Sigmoid colon (tissue), 7 donors: ENCODE measurements at regions of chr1 and their contacts with region 1.

Region 1: DNA sequence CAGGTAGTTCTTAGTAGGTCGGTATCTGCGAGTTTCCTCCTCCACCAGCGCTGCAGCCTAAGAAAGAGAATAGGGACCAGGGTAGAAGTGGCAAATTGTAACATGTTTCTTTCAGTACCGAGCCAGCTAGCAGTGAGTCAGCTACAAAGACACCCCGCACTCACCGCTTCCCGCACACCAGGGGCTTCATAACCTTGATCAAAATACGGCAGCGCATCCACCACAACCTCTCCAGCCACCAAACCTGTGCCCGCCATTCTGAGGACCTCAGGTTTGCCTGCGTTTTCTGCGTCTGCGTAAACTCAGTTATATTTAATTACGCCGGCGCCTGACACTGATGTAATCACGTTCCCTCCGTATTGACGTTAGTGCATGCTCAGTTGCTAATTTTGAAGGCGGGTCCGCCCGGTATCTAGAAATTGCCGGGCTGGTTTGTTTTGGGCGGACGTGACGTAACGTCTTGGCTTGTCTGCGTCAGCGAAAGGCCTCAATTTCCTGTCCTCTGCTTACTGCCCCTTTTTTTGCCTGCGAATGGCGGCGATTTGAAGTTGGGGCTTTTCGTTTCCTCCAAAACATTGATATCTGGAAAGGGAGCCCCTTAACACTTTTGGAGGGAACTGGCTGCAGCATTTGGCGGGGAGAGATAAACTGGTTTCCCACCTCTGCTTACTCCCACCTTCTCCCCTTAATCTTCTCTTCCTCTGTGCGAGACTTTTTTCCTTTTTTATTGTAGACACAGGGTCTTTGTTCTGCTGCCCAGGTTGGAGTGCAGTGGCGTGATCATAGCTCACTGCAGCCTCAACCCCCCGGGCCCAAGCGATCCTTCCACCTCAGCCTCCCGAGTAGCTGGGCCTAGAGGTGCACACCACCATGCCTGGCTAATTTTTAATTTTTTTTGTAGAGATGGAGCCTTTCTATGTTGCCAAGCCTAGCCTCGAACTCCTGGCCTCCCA is at the start of gene BCAS2:
- DNase-seq: peak; percentile 99
- H3K4me3 ChIP-seq: peak within 1 kb of the TSS; percentile 61 to 71 (median 63)
- H3K27ac ChIP-seq: peak within 1 kb of the TSS; percentile 86 to 91 (median 89)
- H3K4me1 ChIP-seq: peaks cover 0 to 33% (median 26%) of the 10 kb centered on the region in 4 donors
- H3K27me3 ChIP-seq: no peaks in the 10 kb centered on the region
- CTCF ChIP-seq: no peak
- EP300 ChIP-seq: peak; percentile 79 to 93 (median 87)
- POLR2A ChIP-seq: peak; percentile 82 to 85
- total RNA-seq, gene BCAS2: 29.1 to 47.6 (median 35.9) TPM

Region 2: GRCh38 chr1:113389953-113390834 is 1191.4 kb before region 1 on chr1 and contains the start of gene MAGI3:
- intact Hi-C with region 1: loop called (anchors 10 kb)
- DNase-seq: peak; percentile 99
- H3K4me3 ChIP-seq: peak within 1 kb of the TSS; percentile 87 to 98 (median 97)
- H3K27ac ChIP-seq: peak within 1 kb of the TSS; percentile 87 to 94 (median 92)
- H3K4me1 ChIP-seq: peaks cover 0 to 42% (median 25%) of the 10 kb centered on the region in 4 donors
- H3K27me3 ChIP-seq: no peaks in the 10 kb centered on the region
- CTCF ChIP-seq: no peak
- EP300 ChIP-seq: no peak
- POLR2A ChIP-seq: peak; percentile 60 to 77
- total RNA-seq, gene MAGI3: 18.9 to 22.5 (median 21.8) TPM

Region 3: GRCh38 chr1:114152508-114153260 is 428.9 kb before region 1 on chr1:
- intact Hi-C with region 1: no loop called
- DNase-seq: peak; percentile 75
- H3K4me3 ChIP-seq: peak overlapping the region; percentile 24 to 53 (median 42)
- H3K27ac ChIP-seq: no peak overlapping the region
- H3K4me1 ChIP-seq: peaks cover 0 to 35% (median 30%) of the 10 kb centered on the region in 4 donors
- H3K27me3 ChIP-seq: peaks cover 39 to 88% (median 75%) of the 10 kb centered on the region in 3 donors
- CTCF ChIP-seq: no peak
- EP300 ChIP-seq: no peak
- POLR2A ChIP-seq: no peak

Region 4: DNA sequence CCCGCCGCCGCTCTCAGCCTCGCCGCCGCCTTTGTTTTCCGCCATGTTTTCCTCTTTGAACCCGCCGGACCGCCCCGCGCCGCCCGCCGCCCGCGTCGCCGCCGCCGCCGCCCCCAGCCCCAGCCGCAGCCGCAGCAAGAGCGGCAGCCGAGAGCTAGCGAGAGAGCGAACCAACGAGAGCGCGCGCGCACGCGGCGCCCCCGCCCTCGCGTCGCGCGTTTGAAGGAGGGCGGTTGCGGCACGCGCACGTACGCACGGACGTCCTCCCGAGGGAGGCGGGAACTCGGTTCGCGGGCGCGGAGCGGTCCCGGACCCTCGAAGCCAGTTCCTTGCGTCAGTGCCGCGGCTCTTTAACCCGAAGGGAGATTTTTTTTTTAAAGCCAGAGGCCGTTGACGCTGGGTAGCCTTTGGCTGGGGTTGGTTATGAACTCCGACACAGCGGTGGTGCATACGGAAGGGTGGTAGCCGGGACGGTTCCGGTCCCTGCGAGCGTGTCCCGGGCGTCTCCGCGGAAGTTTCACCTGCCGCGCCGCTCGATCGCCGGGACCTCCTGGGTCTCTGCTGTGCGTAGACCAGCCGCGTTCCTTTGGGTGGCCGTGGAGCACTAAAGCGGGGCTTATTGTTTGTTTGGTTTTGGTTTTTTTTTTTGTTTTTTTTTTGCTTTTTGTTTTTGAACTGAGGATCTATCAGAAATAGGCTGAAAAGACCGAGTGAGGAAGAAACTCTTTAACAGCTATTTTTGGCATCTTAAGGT is 70.4 kb before region 1 on chr1 and contains the start of gene TRIM33:
- intact Hi-C with region 1: loop called (anchors 1 kb)
- DNase-seq: peak; percentile 94
- H3K4me3 ChIP-seq: peak within 1 kb of the TSS; percentile 85 to 96 (median 86)
- H3K27ac ChIP-seq: peak within 1 kb of the TSS; percentile 88 to 98 (median 98)
- H3K4me1 ChIP-seq: peaks cover 0 to 40% (median 32%) of the 10 kb centered on the region in 4 donors
- H3K27me3 ChIP-seq: no peaks in the 10 kb centered on the region
- CTCF ChIP-seq: no peak
- EP300 ChIP-seq: peak in 1 of 4 donors; percentile 31
- POLR2A ChIP-seq: peak; percentile 57 to 77
- total RNA-seq, gene TRIM33: 38.7 to 42.0 (median 41.5) TPM

Region 5: DNA sequence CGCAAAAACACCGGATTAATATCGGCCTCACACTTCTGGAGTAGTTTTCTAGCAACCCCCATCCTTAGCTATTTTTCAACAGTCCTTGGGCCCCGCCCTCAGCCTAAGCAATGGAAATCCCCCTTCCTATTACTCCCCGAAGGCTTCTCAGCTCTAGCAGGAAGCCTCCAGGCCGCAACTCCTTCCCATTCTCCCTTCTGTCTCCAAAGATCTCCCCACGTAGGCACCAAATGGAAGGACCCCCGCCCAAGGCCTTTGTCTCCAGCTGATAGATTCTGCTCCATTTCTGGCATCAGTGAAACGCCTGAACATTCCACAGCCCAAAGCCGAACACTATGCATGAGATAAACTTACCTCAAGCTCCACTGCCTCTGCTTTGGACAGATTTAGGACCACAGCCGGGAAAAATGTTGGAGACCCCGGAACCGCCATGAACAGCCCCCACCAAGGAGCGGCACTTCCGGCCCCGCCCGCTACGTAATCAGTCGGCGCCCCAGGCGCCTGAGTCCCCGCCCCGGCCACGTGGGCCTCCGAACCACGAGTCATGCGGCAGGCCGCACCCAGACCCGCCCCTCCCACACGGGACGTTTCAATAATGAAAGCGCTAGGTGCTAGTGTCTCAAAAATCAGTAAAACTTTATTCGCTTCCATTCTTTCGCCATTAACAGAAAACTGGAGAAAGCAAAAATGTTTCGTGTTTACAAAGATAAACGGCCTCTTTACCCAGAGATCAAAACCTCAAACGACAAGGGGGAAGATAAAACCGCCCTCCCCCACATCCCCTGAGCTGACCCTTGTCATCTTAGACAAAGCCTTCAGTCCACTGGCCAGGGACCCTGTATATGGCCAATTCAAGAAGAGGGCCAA is 134.9 kb after region 1 on chr1 and contains the start of gene NRAS:
- intact Hi-C with region 1: loop called (anchors 5 kb)
- DNase-seq: peak; percentile 96
- H3K4me3 ChIP-seq: peak within 1 kb of the TSS; percentile 65 to 86 (median 80)
- H3K27ac ChIP-seq: peak within 1 kb of the TSS; percentile 88 to 92 (median 90)
- H3K4me1 ChIP-seq: peaks cover 0 to 24% (median 19%) of the 10 kb centered on the region in 4 donors
- H3K27me3 ChIP-seq: no peaks in the 10 kb centered on the region
- CTCF ChIP-seq: no peak
- EP300 ChIP-seq: peak in 1 of 4 donors; percentile 67
- POLR2A ChIP-seq: peak; percentile 54 to 58
- total RNA-seq, gene NRAS: 13.0 to 16.1 (median 15.7) TPM

Region 6: GRCh38 chr1:114780344-114781226 is 199.0 kb after region 1 on chr1 and contains the start of gene SIKE1:
- intact Hi-C with region 1: loop called (anchors 5 kb)
- DNase-seq: peak; percentile 97
- H3K4me3 ChIP-seq: peak within 1 kb of the TSS; percentile 76 to 86 (median 82)
- H3K27ac ChIP-seq: peak within 1 kb of the TSS; percentile 90 to 95 (median 93)
- H3K4me1 ChIP-seq: peaks cover 0 to 18% (median 8%) of the 10 kb centered on the region in 4 donors
- H3K27me3 ChIP-seq: no peaks in the 10 kb centered on the region
- CTCF ChIP-seq: no peak
- EP300 ChIP-seq: no peak
- POLR2A ChIP-seq: peak; percentile 85 to 88
- total RNA-seq, gene SIKE1: 20.0 to 36.0 (median 26.4) TPM